ENCODE measurements at regions of chr11 and their contacts with region 1.

Region 1: DNA sequence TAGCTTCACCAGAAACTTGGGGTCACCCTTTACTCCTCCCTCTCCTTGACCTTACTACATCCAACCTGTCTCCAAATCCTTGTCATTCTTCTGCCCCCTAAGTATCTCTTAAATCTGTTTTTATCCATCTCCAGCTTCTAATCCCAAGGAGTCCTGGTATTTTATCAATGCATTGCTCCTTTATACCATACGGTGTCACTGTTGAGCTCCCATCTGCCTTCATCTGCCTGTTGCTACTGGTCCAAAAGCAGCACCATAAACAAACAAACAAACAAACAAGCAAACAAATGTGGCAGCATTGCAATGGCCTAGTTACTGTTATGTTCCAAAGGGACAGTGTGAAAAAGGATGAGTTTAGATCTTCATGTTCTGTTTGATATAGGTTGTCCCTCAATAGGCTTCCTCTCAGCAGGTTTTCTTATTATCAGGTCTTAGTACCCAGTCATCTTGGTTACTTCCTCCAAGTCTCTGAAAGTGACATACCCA is 34.2 kb downstream of the DNHD1 start:
- DNase-seq: peak; percentile 37
- H3K4me3 Mint-ChIP-seq: no peak overlapping the region
- H3K27ac Mint-ChIP-seq: no peak overlapping the region
- H3K4me1 Mint-ChIP-seq: peaks cover 13% of the 10 kb centered on the region
- H3K27me3 Mint-ChIP-seq: no peaks in the 10 kb centered on the region

Region 2: GRCh38 chr11:6542727-6543126 is 11.4 kb after region 1 on chr11:
- CTCF ChIA-PET with region 1: interaction called, 13 read pairs
- DNase-seq: no peak
- H3K4me3 Mint-ChIP-seq: no peak overlapping the region
- H3K27ac Mint-ChIP-seq: no peak overlapping the region
- H3K4me1 Mint-ChIP-seq: peaks cover 7% of the 10 kb centered on the region
- H3K27me3 Mint-ChIP-seq: no peaks in the 10 kb centered on the region

Region 3: DNA sequence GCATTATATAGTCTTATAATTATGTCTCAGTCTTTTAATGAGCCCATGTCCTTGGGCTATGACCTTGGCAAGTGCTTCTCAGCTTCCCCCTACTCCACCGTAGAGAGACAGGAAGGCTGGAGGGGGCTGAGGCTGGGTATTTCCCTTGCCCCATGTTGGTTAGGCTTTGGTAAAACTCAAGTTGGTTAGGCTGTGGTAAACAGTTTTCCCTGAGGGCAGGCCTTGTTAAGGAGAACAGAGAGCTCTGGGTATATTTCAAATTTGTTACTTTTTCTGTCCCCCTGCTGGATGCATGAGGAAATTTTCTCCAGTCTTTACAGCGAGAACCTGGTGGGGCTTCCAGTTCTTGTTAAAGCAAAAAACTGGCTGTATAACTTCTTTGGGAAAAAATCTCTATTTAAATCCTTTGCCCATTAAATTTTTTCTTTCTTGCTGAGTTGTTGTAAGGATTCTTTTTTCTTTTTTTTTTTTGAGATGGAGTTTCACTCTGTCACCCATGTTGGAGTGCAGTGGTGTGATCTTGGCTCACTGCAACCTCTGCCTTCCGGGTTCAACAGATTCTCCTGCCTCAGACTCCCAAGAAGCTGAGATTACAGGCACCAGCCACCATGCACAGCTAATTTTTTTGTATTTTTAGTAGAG is 136.5 kb after region 1 on chr11:
- CTCF ChIA-PET with region 1: interaction called, 14 read pairs
- DNase-seq: peak; percentile 35
- H3K4me3 Mint-ChIP-seq: no peak overlapping the region
- H3K27ac Mint-ChIP-seq: peak overlapping the region; percentile 40
- H3K4me1 Mint-ChIP-seq: peaks cover 61% of the 10 kb centered on the region
- H3K27me3 Mint-ChIP-seq: peaks cover 16% of the 10 kb centered on the region

Region 4: GRCh38 chr11:6705905-6706535 is 174.7 kb after region 1 on chr11:
- CTCF ChIA-PET with region 1: interaction called, 30 read pairs
- DNase-seq: peak; percentile 60
- H3K4me3 Mint-ChIP-seq: no peak overlapping the region
- H3K27ac Mint-ChIP-seq: peak overlapping the region; percentile 28
- H3K4me1 Mint-ChIP-seq: peaks cover 5% of the 10 kb centered on the region
- H3K27me3 Mint-ChIP-seq: no peaks in the 10 kb centered on the region

Region 5: GRCh38 chr11:6719576-6719975 is 188.3 kb after region 1 on chr11:
- CTCF ChIA-PET with region 1: no interaction called
- DNase-seq: no peak
- H3K4me3 Mint-ChIP-seq: no peak overlapping the region
- H3K27ac Mint-ChIP-seq: no peak overlapping the region
- H3K4me1 Mint-ChIP-seq: peaks cover 51% of the 10 kb centered on the region
- H3K27me3 Mint-ChIP-seq: no peaks in the 10 kb centered on the region

Measured in activated naive CD4-positive, alpha-beta T cell treated with anti-CD3 and anti-CD28 coated beads, Interleukin-2, amount 10 ng/mL, durations not matched to agents 7 days and 5 days (primary cell).